ENCODE measurements at regions of chr2 and their contacts with region 1.

Region 1: GRCh38 chr2:2331881-2332280 is 806 bp upstream of the MYT1L start:
- DNase-seq: no peak
- ATAC-seq: no peak

Region 2: DNA sequence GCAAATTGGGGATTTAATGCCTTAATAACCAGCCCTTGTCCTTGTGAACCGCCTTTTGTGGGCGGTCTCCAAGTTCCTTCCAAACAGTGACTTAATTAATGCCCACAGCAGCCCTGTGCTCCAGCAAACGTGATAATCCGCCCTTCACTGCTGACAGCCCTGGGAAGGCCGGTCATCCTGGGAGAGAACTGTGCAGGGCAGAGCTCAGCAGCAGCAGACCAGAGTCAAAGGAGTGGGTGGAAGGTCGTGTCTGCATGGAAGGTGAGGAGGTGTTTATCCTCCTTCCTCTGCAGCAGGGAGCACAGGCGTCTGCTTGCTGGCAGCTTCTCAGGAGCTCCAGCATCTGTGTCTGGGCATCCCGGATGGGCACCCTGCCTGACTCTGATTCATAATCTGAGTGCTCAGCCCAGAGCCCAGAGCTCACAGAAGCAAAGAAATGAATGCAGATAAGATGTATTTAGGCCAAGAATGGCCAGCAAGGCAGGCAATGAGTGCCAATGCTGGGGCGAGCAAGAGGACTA is 317.6 kb before region 1 on chr2:
- intact Hi-C with region 1: no loop called
- DNase-seq: peak; percentile 60
- ATAC-seq: peak; percentile 51

Region 3: GRCh38 chr2:2362181-2362580 is 30.3 kb after region 1 on chr2:
- intact Hi-C with region 1: no loop called
- DNase-seq: no peak
- ATAC-seq: no peak

Region 4: DNA sequence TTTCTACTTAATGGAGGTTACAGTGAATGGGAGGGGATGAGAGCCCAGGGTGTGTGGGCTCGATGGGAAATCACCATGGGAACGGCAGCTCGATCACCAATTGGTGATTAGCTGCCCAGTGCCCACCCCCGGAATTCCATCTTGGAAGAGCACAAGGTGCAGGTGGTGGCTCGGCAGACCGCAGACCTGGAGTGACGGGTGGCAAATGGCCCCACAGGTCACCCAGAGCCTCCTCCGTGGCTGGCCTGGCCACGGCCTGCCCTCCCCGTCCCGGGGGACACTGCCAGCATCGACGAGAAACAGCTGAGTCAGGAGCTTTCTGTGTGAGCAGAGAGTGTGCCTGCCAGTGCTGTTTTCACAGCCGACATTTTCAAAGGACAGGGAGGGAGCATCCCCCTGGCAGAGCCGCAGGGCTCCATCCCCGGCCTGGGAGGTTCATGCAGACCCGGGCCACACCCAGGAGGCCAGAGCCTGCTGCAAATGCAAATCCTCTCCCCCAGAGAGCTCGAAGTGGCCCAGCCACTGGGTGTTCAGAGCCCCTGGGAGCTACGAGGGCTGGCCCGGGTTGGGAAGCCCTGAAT is 175.6 kb after region 1 on chr2:
- intact Hi-C with region 1: loop called (anchors 10 kb)
- DNase-seq: no peak
- ATAC-seq: no peak